ENCODE measurements at regions of chr22 and their contacts with region 1.

Region 1: DNA sequence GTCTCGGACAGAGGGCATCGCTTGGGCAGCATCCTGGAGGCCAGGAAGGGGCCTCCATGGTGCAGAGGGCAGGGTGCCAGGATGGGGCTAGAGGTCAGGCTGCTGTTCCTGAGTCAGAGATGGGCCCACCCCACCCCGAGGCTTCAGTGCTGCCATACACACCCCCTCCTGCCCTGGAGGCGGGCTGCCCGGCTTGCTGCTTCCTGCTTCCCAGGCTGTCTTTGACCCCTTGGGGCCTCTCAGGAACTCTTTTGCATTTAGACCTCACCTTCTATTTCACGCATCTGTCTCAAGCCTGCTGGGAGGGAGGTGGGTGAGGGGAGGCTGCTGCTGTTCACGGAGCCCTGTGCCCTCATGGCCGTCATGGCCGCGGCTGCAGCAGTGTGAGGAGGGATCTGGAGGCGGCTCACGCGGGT is 6.6 kb upstream of the GRAMD4 start:
- DNase-seq: no peak
- ATAC-seq: peak; percentile 59
- H3K4me3 Mint-ChIP-seq: peak overlapping the region; percentile 86
- H3K27ac Mint-ChIP-seq: peak overlapping the region; percentile 84
- H3K4me1 Mint-ChIP-seq: peaks cover 35% of the 10 kb centered on the region
- H3K27me3 Mint-ChIP-seq: no peaks in the 10 kb centered on the region
- CTCF ChIP-seq: no peak

Region 2: GRCh38 chr22:46576556-46577367 is 36.9 kb before region 1 on chr22:
- CTCF ChIA-PET with region 1: no interaction called
- POLR2A ChIA-PET with region 1: interaction called, 3 read pairs
- intact Hi-C with region 1: loop called (anchors 5 kb)
- DNase-seq: peak; percentile 71
- ATAC-seq: peak; percentile 76
- H3K4me3 Mint-ChIP-seq: peak overlapping the region; percentile 83
- H3K27ac Mint-ChIP-seq: peak overlapping the region; percentile 82
- H3K4me1 Mint-ChIP-seq: peaks cover 57% of the 10 kb centered on the region
- H3K27me3 Mint-ChIP-seq: no peaks in the 10 kb centered on the region
- CTCF ChIP-seq: no peak

Region 3: DNA sequence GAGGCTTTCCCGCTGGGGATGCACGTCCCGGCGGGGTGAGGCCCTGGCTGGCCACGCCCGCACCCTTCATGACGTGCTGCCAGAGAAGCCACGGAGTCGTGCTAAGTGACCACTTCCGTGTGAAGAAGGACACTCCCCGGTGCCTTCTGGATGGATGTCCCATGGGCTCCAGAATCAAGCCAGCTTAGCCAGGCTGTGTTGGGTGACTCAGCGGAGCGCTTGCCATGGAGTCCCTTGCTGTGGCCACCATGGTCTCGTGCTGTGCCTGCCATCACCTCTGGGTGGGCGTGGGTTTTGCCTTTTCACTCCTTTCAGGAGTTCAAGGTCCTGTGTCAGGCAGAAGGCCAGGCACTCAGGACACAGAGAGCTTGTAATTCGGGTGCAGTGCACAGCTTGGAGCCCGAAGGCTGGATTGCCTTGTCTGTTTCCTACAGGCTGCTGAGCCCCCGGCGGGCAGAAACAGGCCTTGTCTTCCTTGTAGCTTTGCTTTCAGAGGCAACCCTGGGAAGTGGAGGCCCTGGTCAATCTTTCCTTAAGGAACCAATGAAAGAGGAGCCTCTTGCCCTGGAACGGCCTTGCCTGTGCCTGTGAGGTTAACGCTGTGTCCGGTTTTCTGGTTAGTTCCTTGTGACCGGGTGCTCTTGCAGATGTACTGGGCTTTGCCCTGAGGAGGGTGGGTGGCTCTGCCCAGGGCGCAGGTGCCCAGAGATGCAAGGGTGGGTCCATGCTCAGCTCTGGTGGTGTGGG is 417.4 kb after region 1 on chr22:
- CTCF ChIA-PET with region 1: no interaction called
- POLR2A ChIA-PET with region 1: no interaction called
- intact Hi-C with region 1: no loop called
- DNase-seq: no peak
- ATAC-seq: no peak
- H3K4me3 Mint-ChIP-seq: no peak overlapping the region
- H3K27ac Mint-ChIP-seq: no peak overlapping the region
- H3K4me1 Mint-ChIP-seq: no peaks in the 10 kb centered on the region
- H3K27me3 Mint-ChIP-seq: no peaks in the 10 kb centered on the region
- CTCF ChIP-seq: no peak

Measured in activated B cell treated with CpG ODN at 0.5 μM for 24 hours (primary cell).